Mammary epithelial cell (primary cell): ENCODE measurements at regions of chr18 and their contacts with region 1.

Region 1: DNA sequence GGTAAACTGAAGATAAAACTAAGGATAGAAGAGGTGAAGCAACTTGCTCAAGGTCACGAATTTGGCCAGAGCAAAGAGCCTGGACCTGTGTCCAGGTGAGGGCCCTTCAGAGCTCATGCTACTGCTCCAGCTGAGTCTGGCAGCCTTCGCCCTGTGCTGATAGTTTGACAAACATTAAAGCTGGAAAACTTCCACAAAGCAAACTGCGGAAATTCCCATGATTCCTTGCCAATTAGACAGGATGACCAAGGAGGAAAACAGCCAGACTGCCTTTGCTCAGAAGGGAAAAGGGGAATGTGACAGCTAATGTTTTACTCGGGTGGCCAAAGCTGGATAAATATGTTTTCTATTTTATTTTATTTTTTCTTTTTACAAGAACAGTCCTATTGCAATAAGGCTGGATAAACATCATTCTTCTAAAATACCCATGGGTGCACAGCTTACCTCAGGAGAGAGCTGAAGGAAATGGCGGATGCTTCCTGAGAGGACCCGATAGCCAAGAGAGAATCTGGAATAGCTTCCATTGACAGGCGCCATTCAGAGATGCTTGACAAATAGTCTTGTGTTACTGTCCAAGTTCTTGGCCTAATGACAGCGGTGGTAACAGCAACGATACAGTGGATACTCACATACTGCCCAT is 5.3 kb upstream of the CTAGE1 start:
- DNase-seq: peak; percentile 20
- H3K4me3 ChIP-seq: no peak overlapping the region
- H3K27ac ChIP-seq: no peak overlapping the region
- H3K4me1 ChIP-seq: no peaks in the 10 kb centered on the region
- H3K27me3 ChIP-seq: no peaks in the 10 kb centered on the region
- CTCF ChIP-seq: no peak

Region 2: GRCh38 chr18:21914739-21915319 is 508.2 kb before region 1 on chr18:
- CTCF ChIA-PET with region 1: no interaction called
- dilution Hi-C with region 1: no loop called
- in situ Hi-C with region 1: loop called in 1 of 2 experiments (anchors 25 kb)
- intact Hi-C with region 1: no loop called
- DNase-seq: peak; percentile 25
- H3K4me3 ChIP-seq: no peak overlapping the region
- H3K27ac ChIP-seq: no peak overlapping the region
- H3K4me1 ChIP-seq: no peaks in the 10 kb centered on the region
- H3K27me3 ChIP-seq: peaks cover 7% of the 10 kb centered on the region
- CTCF ChIP-seq: peak; percentile 46 to 66

Region 3: DNA sequence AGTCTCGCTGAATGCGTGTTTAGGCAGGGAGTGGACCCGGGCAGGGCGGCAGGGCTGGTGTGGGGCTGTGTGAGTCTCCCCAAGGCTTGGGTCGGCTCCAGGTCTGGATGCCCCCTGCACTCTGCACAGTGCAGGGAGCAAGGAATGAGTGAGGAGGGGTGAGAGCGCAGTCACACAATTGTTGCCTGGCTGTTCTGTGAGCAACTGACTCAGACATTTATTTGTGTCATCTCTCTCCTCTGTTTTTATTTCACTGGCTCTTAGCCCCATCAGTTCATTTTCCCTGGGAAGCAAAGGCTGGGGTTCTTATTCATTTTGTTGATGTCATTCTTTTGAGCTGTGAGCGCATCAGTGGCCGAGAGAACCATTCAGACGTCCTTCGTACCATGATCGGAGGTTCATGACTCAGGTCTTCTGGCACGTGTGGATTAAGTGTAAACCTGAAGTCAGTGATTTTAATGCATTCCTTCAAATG is 192.5 kb before region 1 on chr18:
- CTCF ChIA-PET with region 1: no interaction called
- dilution Hi-C with region 1: no loop called
- in situ Hi-C with region 1: loop called in 1 of 2 experiments (anchors 25 kb)
- intact Hi-C with region 1: no loop called
- DNase-seq: no peak
- H3K4me3 ChIP-seq: no peak overlapping the region
- H3K27ac ChIP-seq: no peak overlapping the region
- H3K4me1 ChIP-seq: peaks cover 4% of the 10 kb centered on the region
- H3K27me3 ChIP-seq: peaks cover 4% of the 10 kb centered on the region
- CTCF ChIP-seq: no peak

Region 4: DNA sequence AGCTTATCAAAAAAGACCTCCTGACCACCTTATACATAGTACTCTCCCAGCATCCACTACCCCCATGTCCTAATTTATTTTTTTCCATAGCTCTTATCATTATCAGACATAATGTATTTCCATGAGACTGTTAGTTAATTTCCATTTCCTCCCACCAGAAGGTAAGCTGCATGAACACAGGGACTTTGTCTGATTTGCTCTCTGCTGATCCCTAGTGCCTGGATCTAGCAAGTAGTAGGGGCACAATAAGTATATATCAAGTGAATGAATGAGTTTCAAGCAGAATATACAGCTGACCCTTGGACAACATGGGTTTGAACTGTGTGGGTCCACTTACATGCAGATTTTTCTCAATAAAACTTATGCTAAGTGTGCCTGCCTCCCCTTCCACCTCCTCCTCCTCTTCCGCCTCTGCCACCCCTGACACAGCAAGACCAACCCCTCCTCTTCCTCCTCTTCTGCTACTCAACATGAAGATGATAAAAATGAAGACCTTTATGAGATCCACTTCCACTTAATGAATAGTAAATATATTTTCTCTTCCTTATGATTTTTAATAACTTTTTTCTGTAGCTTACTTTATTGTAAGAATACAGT is 59.1 kb before region 1 on chr18:
- CTCF ChIA-PET with region 1: no interaction called
- dilution Hi-C with region 1: no loop called
- in situ Hi-C with region 1: loop called in 1 of 2 experiments (anchors 10 kb)
- intact Hi-C with region 1: no loop called
- DNase-seq: no peak
- H3K4me3 ChIP-seq: no peak overlapping the region
- H3K27ac ChIP-seq: no peak overlapping the region
- H3K4me1 ChIP-seq: no peaks in the 10 kb centered on the region
- H3K27me3 ChIP-seq: peaks cover 7% of the 10 kb centered on the region
- CTCF ChIP-seq: peak; percentile 27 to 49